GM12878 (cell line): ENCODE measurements at regions of chr11 and their contacts with region 1.

Region 1: DNA sequence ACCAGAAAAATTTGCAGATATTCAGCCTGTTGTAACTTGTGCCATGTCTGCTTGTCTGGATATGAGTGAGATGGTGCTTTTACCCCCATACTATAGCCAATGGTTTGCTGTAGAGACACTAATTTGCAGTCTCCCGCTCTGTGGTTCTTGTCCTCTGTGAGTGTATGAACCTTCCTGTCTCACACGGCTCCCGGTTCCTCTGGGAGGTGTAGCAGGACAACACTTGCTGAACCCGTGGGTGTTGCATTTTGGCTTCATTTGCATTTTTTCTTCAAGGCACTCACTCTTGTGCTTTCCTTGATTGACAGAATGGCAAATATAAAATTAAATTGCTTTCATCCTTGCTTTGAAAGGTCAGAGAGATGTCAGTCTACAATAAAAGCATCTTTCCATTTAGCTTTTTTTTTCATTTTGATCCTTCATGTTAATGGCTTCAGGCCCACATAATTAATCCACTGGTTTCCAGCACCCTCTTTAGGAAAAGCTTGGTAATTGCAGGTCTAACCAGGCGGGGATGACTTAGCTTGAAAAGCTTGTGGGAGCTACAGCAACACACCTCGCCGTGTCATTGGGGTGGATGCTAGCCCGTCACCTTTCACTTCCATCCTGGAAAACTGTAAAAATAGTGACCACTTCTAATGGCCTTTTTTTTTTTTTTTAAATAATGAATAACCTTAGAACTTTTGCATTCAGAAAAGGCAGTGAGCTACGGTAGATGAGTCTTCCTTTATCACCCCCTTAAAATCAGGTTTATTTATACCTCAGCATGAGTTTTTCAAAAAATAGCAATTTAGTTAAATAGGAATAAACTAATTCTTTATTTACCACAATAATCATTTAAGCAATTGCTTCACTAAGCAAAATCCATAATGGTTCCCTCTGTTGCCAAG is 27.4 kb upstream of the ST14 start:
- DNase-seq: peak; percentile 15
- ATAC-seq: peak; percentile 94
- H3K4me3 ChIP-seq: no peak overlapping the region
- H3K27ac ChIP-seq: no peak overlapping the region
- H3K4me1 ChIP-seq: no peaks in the 10 kb centered on the region
- H3K27me3 ChIP-seq: no peaks in the 10 kb centered on the region
- CTCF ChIP-seq: peak; percentile 72 to 90 (median 89)
- EP300 ChIP-seq: no peak
- POLR2A ChIP-seq: no peak
- RAD21 ChIP-seq: peak; percentile 98

Region 2: GRCh38 chr11:129881570-129882170 is 250.5 kb before region 1 on chr11:
- CTCF ChIA-PET with region 1: interaction called, 47 read pairs
- POLR2A ChIA-PET with region 1: no interaction called
- RAD21 ChIA-PET with region 1: interaction called, 18 read pairs
- SMC1A ChIA-PET with region 1: interaction called, 8 read pairs
- in situ Hi-C with region 1: no loop called
- intact Hi-C with region 1: no loop called
- DNase-seq: no peak
- ATAC-seq: peak; percentile 79
- H3K4me3 ChIP-seq: no peak overlapping the region
- H3K27ac ChIP-seq: no peak overlapping the region
- H3K4me1 ChIP-seq: no peaks in the 10 kb centered on the region
- H3K27me3 ChIP-seq: no peaks in the 10 kb centered on the region
- CTCF ChIP-seq: peak; percentile 36 to 59 (median 55)
- EP300 ChIP-seq: no peak
- POLR2A ChIP-seq: no peak
- RAD21 ChIP-seq: peak; percentile 52

Region 3: DNA sequence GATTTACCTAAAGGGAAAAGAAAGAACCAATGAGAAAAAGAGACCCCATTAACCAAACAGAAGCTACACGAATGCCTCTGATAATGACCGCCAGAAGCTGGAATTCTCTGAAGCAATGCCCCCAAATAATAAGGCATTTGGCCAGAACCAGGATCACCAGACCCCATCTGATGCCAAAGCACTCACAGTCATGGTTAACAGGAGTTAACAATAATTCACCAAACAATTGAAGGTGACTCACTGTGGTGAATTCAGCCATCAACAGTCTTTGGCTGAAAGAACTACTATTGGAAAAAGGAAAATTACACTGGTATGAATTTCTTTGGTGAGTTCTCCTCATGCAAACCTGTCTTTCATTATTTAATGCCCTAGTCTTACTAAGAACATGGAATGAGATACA is 215.0 kb before region 1 on chr11:
- CTCF ChIA-PET with region 1: interaction called, 400 read pairs
- POLR2A ChIA-PET with region 1: interaction called, 3 read pairs
- RAD21 ChIA-PET with region 1: interaction called, 209 read pairs
- SMC1A ChIA-PET with region 1: interaction called, 130 read pairs
- in situ Hi-C with region 1: loop called (anchors 5 kb)
- intact Hi-C with region 1: no loop called
- DNase-seq: no peak
- ATAC-seq: no peak
- H3K4me3 ChIP-seq: no peak overlapping the region
- H3K27ac ChIP-seq: no peak overlapping the region
- H3K4me1 ChIP-seq: no peaks in the 10 kb centered on the region
- H3K27me3 ChIP-seq: no peaks in the 10 kb centered on the region
- CTCF ChIP-seq: no peak
- EP300 ChIP-seq: no peak
- POLR2A ChIP-seq: no peak
- RAD21 ChIP-seq: no peak

Region 4: DNA sequence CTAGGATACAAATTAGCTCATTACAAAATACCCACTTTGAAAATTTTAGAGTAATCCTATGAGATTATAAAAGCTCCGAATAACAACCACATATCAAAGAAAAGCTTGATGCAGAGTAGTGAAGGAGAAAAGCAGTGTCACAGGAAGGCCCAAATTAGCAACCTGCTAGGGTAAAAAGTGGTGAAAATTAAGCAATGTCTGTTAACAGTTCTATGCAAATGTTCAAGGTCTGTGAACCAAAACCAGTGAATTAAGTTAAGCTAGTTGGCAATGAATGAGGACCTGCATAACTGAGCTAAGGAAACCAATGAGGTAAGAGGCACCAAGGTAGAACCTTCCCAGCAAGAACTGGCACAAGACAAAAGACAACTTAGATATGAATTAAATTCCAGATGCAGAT is 159.1 kb before region 1 on chr11:
- CTCF ChIA-PET with region 1: interaction called, 16 read pairs
- POLR2A ChIA-PET with region 1: no interaction called
- RAD21 ChIA-PET with region 1: interaction called, 7 read pairs
- SMC1A ChIA-PET with region 1: interaction called, 13 read pairs
- in situ Hi-C with region 1: no loop called
- intact Hi-C with region 1: no loop called
- DNase-seq: no peak
- ATAC-seq: peak; percentile 73
- H3K4me3 ChIP-seq: no peak overlapping the region
- H3K27ac ChIP-seq: no peak overlapping the region; the same call in 1 of the 2 replicates
- H3K4me1 ChIP-seq: peaks cover 6% of the 10 kb centered on the region; the same call in 1 of the 2 replicates
- H3K27me3 ChIP-seq: no peaks in the 10 kb centered on the region
- CTCF ChIP-seq: no peak
- EP300 ChIP-seq: no peak
- POLR2A ChIP-seq: no peak
- RAD21 ChIP-seq: no peak

Region 5: DNA sequence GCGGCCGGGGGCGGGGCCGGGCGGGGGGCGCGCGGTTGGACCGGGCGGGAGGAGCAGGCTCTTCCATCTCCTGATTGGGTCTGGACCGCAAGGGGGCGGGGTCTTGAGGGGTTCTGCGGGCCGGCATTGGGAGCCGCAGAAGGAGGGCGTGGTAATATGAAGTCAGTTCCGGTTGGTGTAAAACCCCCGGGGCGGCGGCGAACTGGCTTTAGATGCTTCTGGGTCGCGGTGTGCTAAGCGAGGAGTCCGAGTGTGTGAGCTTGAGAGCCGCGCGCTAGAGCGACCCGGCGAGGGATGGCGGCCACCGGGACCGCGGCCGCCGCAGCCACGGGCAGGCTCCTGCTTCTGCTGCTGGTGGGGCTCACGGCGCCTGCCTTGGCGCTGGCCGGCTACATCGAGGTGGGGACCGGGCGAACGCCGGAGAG is 62.5 kb before region 1 on chr11 and contains the start of gene APLP2:
- CTCF ChIA-PET with region 1: interaction called, 9 read pairs
- POLR2A ChIA-PET with region 1: no interaction called
- RAD21 ChIA-PET with region 1: interaction called, 12 read pairs
- SMC1A ChIA-PET with region 1: interaction called, 14 read pairs
- in situ Hi-C with region 1: no loop called
- intact Hi-C with region 1: loop called (anchors 5 kb)
- DNase-seq: peak; percentile 75
- ATAC-seq: peak; percentile 93
- H3K4me3 ChIP-seq: peak within 1 kb of the TSS; percentile 76
- H3K27ac ChIP-seq: no peak within 1 kb of the TSS
- H3K4me1 ChIP-seq: no peaks in the 10 kb centered on the region
- H3K27me3 ChIP-seq: peaks cover 0 to 4% of the 10 kb centered on the region in 2 experiments; a peak in 1 of 4 replicates
- CTCF ChIP-seq: no peak
- EP300 ChIP-seq: no peak
- POLR2A ChIP-seq: peak; percentile 97
- RAD21 ChIP-seq: no peak
- polyA plus RNA-seq, gene APLP2: 2.3 to 4.6 TPM